ENCODE measurements at regions of chr14 and their contacts with region 1.

Region 1: DNA sequence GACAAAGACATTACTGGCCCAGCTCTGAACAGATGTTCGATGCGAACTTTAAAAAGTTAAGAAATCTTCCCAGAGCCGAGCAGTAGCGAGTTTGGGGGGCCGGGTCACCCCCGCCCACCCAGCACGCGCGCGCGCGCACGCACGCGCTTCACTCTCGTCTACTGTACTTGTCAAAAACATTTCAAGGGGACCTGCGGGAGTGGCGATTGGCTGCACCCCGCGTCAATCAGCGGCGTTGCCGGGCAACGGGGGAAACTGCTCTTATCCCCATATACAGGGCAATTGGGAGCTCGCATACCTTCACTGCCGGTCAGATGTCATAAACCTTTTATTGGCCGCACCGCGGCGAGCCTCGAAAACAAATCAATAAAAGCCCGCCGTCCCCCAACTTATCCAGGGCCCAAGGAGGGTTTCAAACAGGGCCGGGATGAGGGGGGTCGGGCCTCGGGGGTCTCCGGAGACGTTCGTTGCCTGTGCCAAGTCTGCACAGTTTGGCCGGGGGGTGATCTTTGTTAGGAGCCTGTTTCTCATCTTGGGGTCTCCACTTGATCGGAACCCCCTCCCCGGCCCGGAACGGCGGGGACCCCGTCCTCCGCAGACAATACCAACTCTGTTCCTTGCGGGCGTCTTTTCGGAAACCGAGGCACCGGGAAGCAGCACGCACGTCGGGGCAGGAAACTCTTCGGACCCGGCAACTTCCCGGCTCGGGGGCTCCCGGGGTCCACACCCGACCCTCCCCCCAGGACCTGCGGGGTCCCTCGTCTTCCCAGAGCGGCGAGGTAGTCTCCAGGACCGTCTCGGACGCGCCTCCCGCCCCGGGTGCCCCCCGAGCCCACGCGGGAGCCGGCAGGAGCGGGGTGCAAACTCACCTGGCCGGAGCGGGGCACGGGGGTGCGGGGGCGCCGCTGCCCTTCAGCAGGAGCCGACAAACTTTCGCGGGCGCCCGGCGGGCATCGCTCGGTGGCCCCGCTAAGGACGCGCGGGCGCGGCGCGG is 734 bp downstream of the FOXN3 start:
- DNase-seq: peak; percentile 100
- ATAC-seq: peak; percentile 64
- H3K4me3 Mint-ChIP-seq: peak overlapping the region; percentile 92
- H3K27ac Mint-ChIP-seq: peak overlapping the region; percentile 95
- H3K4me1 Mint-ChIP-seq: peaks cover 48% of the 10 kb centered on the region
- H3K27me3 Mint-ChIP-seq: no peaks in the 10 kb centered on the region
- CTCF ChIP-seq: no peak

Region 2: GRCh38 chr14:89040460-89041259 is 375.6 kb before region 1 on chr14:
- CTCF ChIA-PET with region 1: no interaction called
- POLR2A ChIA-PET with region 1: no interaction called
- intact Hi-C with region 1: loop called (anchors 1 kb)
- DNase-seq: peak; percentile 76
- ATAC-seq: peak; percentile 71
- H3K4me3 Mint-ChIP-seq: peak overlapping the region; percentile 81
- H3K27ac Mint-ChIP-seq: no peak overlapping the region
- H3K4me1 Mint-ChIP-seq: peaks cover 14% of the 10 kb centered on the region
- H3K27me3 Mint-ChIP-seq: peaks cover 34% of the 10 kb centered on the region
- CTCF ChIP-seq: peak; percentile 95

Region 3: GRCh38 chr14:89264196-89264800 is 152.0 kb before region 1 on chr14:
- CTCF ChIA-PET with region 1: no interaction called
- POLR2A ChIA-PET with region 1: interaction called, 3 read pairs
- intact Hi-C with region 1: loop called (anchors 1 kb)
- DNase-seq: no peak
- ATAC-seq: peak; percentile 90
- H3K4me3 Mint-ChIP-seq: peak overlapping the region; percentile 75
- H3K27ac Mint-ChIP-seq: peak overlapping the region; percentile 94
- H3K4me1 Mint-ChIP-seq: peaks cover 73% of the 10 kb centered on the region
- H3K27me3 Mint-ChIP-seq: no peaks in the 10 kb centered on the region
- CTCF ChIP-seq: no peak

Region 4: DNA sequence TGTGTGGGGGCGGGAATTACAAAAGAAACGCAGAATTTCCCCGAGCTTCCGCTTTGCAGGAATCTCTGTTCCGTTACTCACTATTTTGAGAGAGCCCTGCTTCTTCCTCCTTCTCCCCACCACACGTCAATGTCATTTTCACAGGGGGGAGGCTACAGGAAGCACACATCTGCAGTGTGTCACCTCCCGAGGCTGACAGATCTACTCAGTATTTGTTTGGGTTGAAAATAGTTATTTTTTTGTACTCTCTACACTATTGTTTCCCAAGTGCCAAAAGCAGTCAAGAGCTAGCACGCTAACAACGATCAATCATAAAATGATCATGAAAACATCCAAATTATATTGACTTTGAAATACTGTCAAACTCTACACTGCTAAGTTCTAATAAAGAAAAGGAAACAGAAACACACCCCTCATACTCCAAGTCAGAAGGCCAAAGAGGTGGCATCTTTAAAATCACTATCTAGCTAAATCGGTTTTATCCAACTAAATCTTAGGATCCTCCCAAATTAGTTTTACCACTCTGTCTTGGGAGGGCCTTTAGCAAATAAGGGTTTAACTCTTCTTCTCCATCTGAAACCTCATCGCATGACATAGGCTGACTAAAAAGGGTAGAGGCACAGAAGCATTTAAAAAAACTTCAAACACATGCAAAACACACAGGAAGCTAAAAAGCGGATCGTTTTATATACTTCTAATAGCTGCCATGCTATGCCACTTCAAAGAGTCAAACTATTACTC is 51.1 kb before region 1 on chr14:
- CTCF ChIA-PET with region 1: no interaction called
- POLR2A ChIA-PET with region 1: interaction called, 26 read pairs
- intact Hi-C with region 1: loop called (anchors 1 kb)
- DNase-seq: peak; percentile 43
- ATAC-seq: peak; percentile 93
- H3K4me3 Mint-ChIP-seq: peak overlapping the region; percentile 80
- H3K27ac Mint-ChIP-seq: peak overlapping the region; percentile 94
- H3K4me1 Mint-ChIP-seq: peaks cover 67% of the 10 kb centered on the region
- H3K27me3 Mint-ChIP-seq: no peaks in the 10 kb centered on the region
- CTCF ChIP-seq: no peak

Region 5: DNA sequence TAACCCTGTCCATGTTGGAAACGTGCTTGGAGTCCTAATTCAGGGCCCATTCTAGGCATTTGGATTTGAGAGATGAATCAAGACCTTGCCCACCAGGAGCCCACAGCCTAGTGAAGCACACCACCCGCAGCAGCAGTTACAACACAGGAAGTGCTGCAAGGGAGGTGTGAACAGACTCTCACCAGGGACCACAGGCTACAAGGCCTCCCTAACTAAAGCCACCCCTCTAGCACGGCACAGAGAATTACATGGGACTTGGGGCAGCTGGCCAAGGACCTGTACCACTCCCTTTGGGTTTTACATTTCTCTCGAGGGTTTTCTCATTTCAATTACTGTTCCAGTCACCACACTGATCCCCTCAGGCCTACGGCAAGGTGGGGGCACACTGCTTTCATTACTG is 50.2 kb after region 1 on chr14:
- CTCF ChIA-PET with region 1: no interaction called
- POLR2A ChIA-PET with region 1: interaction called, 4 read pairs
- intact Hi-C with region 1: loop called (anchors 2 kb)
- DNase-seq: no peak
- ATAC-seq: peak; percentile 57
- H3K4me3 Mint-ChIP-seq: no peak overlapping the region
- H3K27ac Mint-ChIP-seq: peak overlapping the region; percentile 50
- H3K4me1 Mint-ChIP-seq: peaks cover 42% of the 10 kb centered on the region
- H3K27me3 Mint-ChIP-seq: no peaks in the 10 kb centered on the region
- CTCF ChIP-seq: no peak

Region 6: DNA sequence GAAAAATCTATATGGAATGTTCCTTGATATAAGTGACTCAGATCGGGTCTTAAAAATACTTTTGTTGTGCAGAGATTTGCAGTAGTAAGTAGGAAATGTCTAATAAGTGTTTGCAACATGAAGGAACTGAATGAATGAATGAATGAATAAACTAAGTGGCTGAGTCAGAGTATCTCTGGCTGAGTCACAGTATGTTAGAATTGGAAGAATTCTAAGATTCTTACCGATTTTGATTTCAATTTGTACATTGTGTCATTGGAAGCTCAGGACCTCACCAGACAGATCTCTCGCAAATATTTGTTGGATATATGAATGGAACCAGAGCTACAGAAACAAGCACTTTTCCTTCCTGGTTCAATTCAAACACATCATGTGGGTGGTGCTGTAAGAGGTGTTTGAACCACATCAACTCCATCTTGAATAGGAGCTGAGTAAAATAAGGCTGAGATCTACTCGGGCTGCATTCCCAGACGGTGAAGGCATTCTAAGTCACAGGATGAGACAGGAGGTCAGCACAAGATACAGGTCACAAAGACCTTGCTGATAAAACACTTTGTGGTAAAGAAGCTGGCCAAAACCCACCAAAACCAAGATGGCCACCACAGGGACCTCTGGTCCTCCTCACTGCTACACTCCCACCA is 124.7 kb after region 1 on chr14:
- CTCF ChIA-PET with region 1: no interaction called
- POLR2A ChIA-PET with region 1: no interaction called
- intact Hi-C with region 1: no loop called
- DNase-seq: no peak
- ATAC-seq: no peak
- H3K4me3 Mint-ChIP-seq: no peak overlapping the region
- H3K27ac Mint-ChIP-seq: no peak overlapping the region
- H3K4me1 Mint-ChIP-seq: peaks cover 14% of the 10 kb centered on the region
- H3K27me3 Mint-ChIP-seq: no peaks in the 10 kb centered on the region
- CTCF ChIP-seq: no peak

Region 7: GRCh38 chr14:89640141-89640540 is 223.8 kb after region 1 on chr14:
- CTCF ChIA-PET with region 1: no interaction called
- POLR2A ChIA-PET with region 1: no interaction called
- intact Hi-C with region 1: no loop called
- DNase-seq: no peak
- ATAC-seq: no peak
- H3K4me3 Mint-ChIP-seq: no peak overlapping the region
- H3K27ac Mint-ChIP-seq: peak overlapping the region; percentile 10
- H3K4me1 Mint-ChIP-seq: peaks cover 19% of the 10 kb centered on the region
- H3K27me3 Mint-ChIP-seq: no peaks in the 10 kb centered on the region
- CTCF ChIP-seq: no peak

Region 8: GRCh38 chr14:89650077-89650978 is 234.0 kb after region 1 on chr14:
- CTCF ChIA-PET with region 1: no interaction called
- POLR2A ChIA-PET with region 1: no interaction called
- intact Hi-C with region 1: no loop called
- DNase-seq: no peak
- ATAC-seq: peak; percentile 60
- H3K4me3 Mint-ChIP-seq: peak overlapping the region; percentile 3
- H3K27ac Mint-ChIP-seq: peak overlapping the region; percentile 37
- H3K4me1 Mint-ChIP-seq: peaks cover 22% of the 10 kb centered on the region
- H3K27me3 Mint-ChIP-seq: no peaks in the 10 kb centered on the region
- CTCF ChIP-seq: no peak

Region 9: GRCh38 chr14:89701211-89702043 is 285.1 kb after region 1 on chr14:
- CTCF ChIA-PET with region 1: no interaction called
- POLR2A ChIA-PET with region 1: no interaction called
- intact Hi-C with region 1: loop called (anchors 1 kb)
- DNase-seq: peak; percentile 81
- ATAC-seq: peak; percentile 95
- H3K4me3 Mint-ChIP-seq: peak overlapping the region; percentile 77
- H3K27ac Mint-ChIP-seq: peak overlapping the region; percentile 86
- H3K4me1 Mint-ChIP-seq: peaks cover 28% of the 10 kb centered on the region
- H3K27me3 Mint-ChIP-seq: no peaks in the 10 kb centered on the region
- CTCF ChIP-seq: no peak

Region 10: GRCh38 chr14:89954070-89955028 is 538.0 kb after region 1 on chr14 and contains the start of gene EFCAB11:
- CTCF ChIA-PET with region 1: no interaction called
- POLR2A ChIA-PET with region 1: interaction called, 4 read pairs
- intact Hi-C with region 1: loop called (anchors 1 kb)
- DNase-seq: peak; percentile 85
- ATAC-seq: peak; percentile 83
- H3K4me3 Mint-ChIP-seq: peak within 1 kb of the TSS; percentile 99
- H3K27ac Mint-ChIP-seq: peak within 1 kb of the TSS; percentile 95
- H3K4me1 Mint-ChIP-seq: peaks cover 32% of the 10 kb centered on the region
- H3K27me3 Mint-ChIP-seq: no peaks in the 10 kb centered on the region
- CTCF ChIP-seq: no peak
- total RNA-seq, gene EFCAB11: 7.5 and 10.0 TPM in 2 replicates

Measured in activated B cell treated with CpG ODN at 0.5 μM for 24 hours (primary cell).